ENCODE measurements at regions of chr11 and their contacts with region 1.

Region 1: GRCh38 chr11:65540297-65541092 is 15.6 kb downstream of the SCYL1 start:
- DNase-seq: peak; percentile 96
- ATAC-seq: peak; percentile 94
- H3K4me3 Mint-ChIP-seq: peak overlapping the region; percentile 81
- H3K27ac Mint-ChIP-seq: peak overlapping the region; percentile 82
- H3K4me1 Mint-ChIP-seq: peaks cover 9% of the 10 kb centered on the region
- H3K27me3 Mint-ChIP-seq: no peaks in the 10 kb centered on the region

Region 2: DNA sequence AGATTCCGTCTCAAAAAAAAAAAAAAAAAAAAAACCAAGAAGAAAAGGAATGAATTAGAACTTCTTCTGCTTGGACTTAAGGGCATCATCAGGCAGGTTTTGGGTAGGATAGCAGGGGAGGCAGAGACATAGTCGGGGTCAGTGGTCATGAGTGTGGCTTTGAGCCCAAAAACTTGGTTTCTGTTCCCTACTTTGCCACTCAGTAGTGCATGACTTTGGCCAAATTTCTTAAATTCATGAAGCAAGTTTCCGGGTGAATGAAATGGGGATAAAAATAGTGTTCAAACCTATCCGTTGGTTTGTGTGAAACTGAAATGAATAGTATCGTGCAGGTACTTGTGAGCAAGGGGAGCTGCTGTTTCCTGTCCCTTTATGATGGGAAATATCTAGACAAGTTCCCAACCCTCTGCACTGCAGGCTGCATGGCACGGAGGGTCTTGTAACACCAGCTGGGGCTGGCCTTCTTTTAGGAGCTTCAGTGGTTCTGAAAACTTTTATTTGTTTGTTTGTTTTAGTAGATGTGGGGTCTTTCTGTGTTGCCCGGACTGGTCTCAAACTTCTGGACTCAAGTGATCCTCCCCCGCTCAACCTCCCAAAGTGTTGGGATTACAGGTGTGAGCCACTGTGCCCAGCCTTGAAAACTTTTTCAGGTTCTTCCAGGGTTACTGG is 99.5 kb before region 1 on chr11:
- CTCF ChIA-PET with region 1: no interaction called
- DNase-seq: no peak
- ATAC-seq: peak; percentile 18
- H3K4me3 Mint-ChIP-seq: peak overlapping the region; percentile 7
- H3K27ac Mint-ChIP-seq: peak overlapping the region; percentile 82
- H3K4me1 Mint-ChIP-seq: peaks cover 64% of the 10 kb centered on the region
- H3K27me3 Mint-ChIP-seq: no peaks in the 10 kb centered on the region

Region 3: GRCh38 chr11:65524741-65525545 is 15.6 kb before region 1 on chr11 and contains the start of gene SCYL1:
- CTCF ChIA-PET with region 1: interaction called, 31 read pairs
- DNase-seq: peak; percentile 82
- ATAC-seq: peak; percentile 91
- H3K4me3 Mint-ChIP-seq: peak within 1 kb of the TSS; percentile 73
- H3K27ac Mint-ChIP-seq: peak within 1 kb of the TSS; percentile 75
- H3K4me1 Mint-ChIP-seq: peaks cover 42% of the 10 kb centered on the region
- H3K27me3 Mint-ChIP-seq: no peaks in the 10 kb centered on the region
- total RNA-seq, gene SCYL1: 68.0 to 76.7 TPM

Region 4: DNA sequence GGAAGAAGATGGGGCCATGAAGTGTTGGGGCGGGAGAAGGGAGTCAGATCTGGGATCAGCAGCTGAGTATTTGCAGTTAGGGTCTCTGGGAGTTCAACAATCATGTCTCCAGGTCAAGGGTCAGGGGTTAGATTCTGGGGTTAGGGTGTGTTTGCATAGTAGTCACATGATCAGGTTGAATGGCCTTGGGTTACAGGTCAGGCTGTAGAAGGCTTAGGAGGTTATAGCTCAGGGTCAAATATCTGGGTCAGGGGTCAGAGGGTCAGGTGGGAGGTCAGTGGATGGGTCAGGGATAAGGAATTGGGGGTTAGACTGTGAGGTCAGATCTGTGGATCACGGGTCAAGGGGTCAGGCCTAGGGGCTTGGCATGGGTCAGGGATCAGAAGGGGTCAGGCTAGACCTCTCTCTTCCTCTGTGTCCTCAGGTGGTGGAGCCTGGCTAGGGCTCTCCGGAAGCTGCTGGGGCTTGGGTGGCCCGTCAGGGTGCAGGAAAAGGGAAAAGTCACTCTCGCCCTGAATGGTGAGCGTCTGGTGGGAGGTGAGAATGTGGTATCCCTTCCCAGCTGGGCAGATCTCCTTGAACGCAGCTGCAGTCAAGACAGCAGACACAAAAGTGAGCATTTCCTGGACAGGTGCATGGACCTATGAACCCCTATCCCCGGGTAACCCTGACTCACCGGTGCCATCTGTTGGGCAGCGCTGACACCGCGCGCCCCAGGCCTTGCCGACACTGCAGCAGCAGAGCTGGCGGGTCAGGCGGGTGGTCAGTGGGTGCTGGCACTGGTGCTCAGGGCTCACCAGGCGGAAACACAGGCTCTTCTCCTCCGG is 11.3 kb after region 1 on chr11:
- CTCF ChIA-PET with region 1: interaction called, 42 read pairs
- DNase-seq: peak; percentile 75
- ATAC-seq: peak; percentile 56
- H3K4me3 Mint-ChIP-seq: no peak overlapping the region
- H3K27ac Mint-ChIP-seq: peak overlapping the region; percentile 58
- H3K4me1 Mint-ChIP-seq: peaks cover 68% of the 10 kb centered on the region
- H3K27me3 Mint-ChIP-seq: no peaks in the 10 kb centered on the region

Region 5: DNA sequence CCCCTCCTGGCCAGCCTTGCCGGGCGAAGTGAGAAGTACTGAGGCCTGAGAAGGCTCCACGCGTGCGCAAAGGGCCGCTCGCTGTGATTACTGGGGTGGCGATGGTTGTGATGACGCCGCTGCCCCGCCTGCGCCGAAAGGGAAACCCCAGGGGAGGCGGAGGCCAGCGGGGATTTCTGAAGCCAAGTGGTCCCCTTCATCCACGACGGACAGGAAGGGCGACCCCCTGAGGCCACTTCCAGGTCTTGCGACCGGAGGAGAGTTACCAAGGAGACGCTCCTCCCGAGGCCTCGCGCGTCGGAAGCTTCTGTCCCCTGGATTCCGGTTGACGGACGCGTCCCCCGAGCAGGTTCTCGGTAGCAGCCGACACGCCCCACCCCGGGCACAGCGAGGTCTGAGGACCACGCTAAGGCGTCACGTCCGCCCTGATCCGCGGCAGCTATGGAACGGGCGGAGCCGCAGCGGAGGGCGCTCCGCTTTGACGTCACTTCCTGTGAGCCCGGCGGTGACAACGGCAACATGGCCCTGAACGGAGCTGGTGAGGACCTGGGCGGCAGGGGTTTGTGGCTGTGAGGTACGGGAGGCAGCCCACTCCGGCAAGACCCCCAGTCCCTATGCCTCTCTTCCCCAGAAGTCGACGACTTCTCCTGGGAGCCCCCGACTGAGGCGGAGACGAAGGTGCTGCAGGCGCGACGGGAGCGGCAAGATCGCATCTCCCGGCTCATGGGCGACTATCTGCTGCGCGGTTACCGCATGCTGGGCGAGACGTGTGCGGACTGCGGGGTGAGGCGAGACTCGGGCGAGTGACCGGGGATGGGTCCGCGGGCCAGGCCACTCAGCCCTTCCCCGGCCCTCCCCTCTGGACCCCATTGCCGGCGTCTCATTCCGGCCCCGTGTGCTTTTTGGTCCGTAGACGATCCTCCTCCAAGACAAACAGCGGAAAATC is 29.8 kb after region 1 on chr11 and contains the start of gene ZNRD2:
- CTCF ChIA-PET with region 1: interaction called, 388 read pairs
- DNase-seq: peak; percentile 100
- ATAC-seq: peak; percentile 74
- H3K4me3 Mint-ChIP-seq: peak within 1 kb of the TSS; percentile 100
- H3K27ac Mint-ChIP-seq: peak within 1 kb of the TSS; percentile 98
- H3K4me1 Mint-ChIP-seq: peaks cover 66% of the 10 kb centered on the region
- H3K27me3 Mint-ChIP-seq: no peaks in the 10 kb centered on the region
- total RNA-seq, gene ZNRD2: 42.1 to 45.5 TPM

Region 6: DNA sequence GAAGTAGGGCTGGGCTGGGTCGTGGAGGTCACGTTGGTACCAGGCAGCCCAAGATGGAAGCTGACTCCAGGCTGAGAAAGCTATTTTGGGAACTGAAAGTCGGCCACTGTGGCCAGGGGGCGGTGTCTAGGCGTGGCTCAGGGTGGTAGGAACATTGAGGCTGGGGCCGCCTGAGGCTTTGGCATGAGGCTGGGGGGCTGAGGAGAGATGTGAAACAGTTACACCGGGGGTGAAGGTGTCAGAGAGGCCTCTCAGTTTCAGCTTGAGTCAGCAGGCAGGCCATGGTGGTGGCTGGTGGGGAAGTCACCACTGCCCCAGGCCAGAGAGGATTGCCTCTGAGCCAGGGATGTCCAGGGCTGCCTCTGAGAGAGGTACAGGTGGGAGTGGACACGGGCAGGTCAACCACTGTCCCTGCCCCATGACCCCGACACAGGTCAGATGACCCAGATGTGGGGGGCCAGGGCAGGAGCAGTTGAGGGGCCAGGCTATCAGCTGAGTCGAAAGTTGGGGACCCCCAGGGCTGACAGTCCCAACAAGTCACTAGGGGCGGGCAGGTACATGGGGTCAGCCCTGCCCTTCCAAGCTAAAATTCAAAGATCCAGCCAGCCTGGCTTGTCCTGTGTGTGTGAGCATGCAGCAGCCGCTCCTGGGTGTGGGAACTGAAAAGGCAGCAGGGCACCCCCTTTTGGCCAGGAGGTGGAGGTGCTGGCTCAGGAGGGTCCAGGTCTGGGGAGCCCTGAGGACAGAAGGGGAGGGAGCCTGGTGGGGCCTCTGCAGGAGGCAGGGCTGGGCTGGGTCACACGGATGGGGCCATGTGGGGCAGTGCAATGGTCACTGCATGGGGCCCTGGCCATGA is 47.9 kb after region 1 on chr11:
- CTCF ChIA-PET with region 1: interaction called, 209 read pairs
- DNase-seq: peak; percentile 93
- ATAC-seq: peak; percentile 85
- H3K4me3 Mint-ChIP-seq: peak overlapping the region; percentile 37
- H3K27ac Mint-ChIP-seq: peak overlapping the region; percentile 96
- H3K4me1 Mint-ChIP-seq: peaks cover 49% of the 10 kb centered on the region
- H3K27me3 Mint-ChIP-seq: no peaks in the 10 kb centered on the region

Region 7: DNA sequence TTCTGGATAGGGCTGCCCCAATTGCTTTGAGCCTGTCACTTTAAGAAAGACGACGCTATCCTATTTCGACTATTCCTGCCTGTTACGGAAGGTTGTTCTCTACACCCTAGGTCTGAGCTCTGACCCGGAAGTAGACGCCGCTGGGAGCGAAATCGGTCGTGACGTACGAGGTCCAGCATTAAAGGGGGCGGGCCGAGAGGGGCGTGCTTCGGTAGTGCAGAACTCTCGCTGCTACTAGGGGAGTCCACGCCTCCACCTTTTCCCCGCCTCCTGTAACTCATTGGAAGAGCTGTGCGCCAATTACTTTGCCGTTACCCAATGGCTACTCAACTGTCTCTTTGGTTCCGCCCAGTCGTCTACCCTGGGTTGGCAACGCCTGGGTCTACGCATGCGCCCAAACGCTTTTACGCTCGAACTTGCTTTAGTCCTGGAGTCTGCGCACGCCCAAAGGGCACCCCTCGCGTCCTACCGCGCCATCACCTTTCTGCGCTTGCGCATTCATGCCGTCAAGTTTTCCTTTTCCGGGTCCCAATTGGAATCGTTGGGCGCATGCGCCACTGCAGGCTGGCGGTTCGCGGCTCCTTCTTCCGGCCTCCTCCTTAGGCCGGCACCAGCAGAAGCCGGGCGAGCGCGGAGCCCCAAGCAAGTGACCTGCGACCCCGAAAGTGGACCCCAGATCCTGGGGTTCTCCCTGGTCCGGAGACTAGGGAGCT is 74.9 kb after region 1 on chr11 and contains the start of gene PCNX3:
- CTCF ChIA-PET with region 1: interaction called, 19 read pairs
- DNase-seq: peak; percentile 100
- ATAC-seq: peak; percentile 86
- H3K4me3 Mint-ChIP-seq: peak within 1 kb of the TSS; percentile 85
- H3K27ac Mint-ChIP-seq: peak within 1 kb of the TSS; percentile 96
- H3K4me1 Mint-ChIP-seq: peaks cover 44% of the 10 kb centered on the region
- H3K27me3 Mint-ChIP-seq: no peaks in the 10 kb centered on the region
- total RNA-seq, gene PCNX3: 54.9 to 57.1 TPM